ENCODE measurements at regions of chr5 and their contacts with region 1.

Region 1: GRCh38 chr5:112146323-112147226 is 272.5 kb downstream of the EPB41L4A start:
- DNase-seq: peak; percentile 57 to 66 (median 58)
- H3K4me3 ChIP-seq: no peak overlapping the region
- H3K4me3 Mint-ChIP-seq: no peak overlapping the region
- H3K27ac ChIP-seq: no peak overlapping the region
- H3K27ac Mint-ChIP-seq: no peak overlapping the region
- H3K4me1 ChIP-seq: no peaks in the 10 kb centered on the region
- H3K4me1 Mint-ChIP-seq: no peaks in the 10 kb centered on the region
- H3K27me3 ChIP-seq: no peaks in the 10 kb centered on the region
- H3K27me3 Mint-ChIP-seq: peaks cover 12 to 20% of the 10 kb centered on the region in 2 donors

Region 2: GRCh38 chr5:110757118-110757729 is 1389.4 kb before region 1 on chr5:
- CTCF ChIA-PET with region 1: interaction called, 3 read pairs
- POLR2A ChIA-PET with region 1: no interaction called
- intact Hi-C with region 1: loop called (anchors 1 kb)
- DNase-seq: peak in 4 of 5 donors; percentile 28 to 43 (median 30)
- H3K4me3 ChIP-seq: no peak overlapping the region
- H3K4me3 Mint-ChIP-seq: no peak overlapping the region
- H3K27ac ChIP-seq: no peak overlapping the region
- H3K27ac Mint-ChIP-seq: peak overlapping the region in 1 of 7 donors; percentile 40
- H3K4me1 ChIP-seq: peaks cover 26% of the 10 kb centered on the region
- H3K4me1 Mint-ChIP-seq: peaks cover 20 to 31% (median 22%) of the 10 kb centered on the region in 4 donors
- H3K27me3 ChIP-seq: no peaks in the 10 kb centered on the region
- H3K27me3 Mint-ChIP-seq: no peaks in the 10 kb centered on the region

Region 3: GRCh38 chr5:111158105-111158744 is 988.4 kb before region 1 on chr5:
- CTCF ChIA-PET with region 1: interaction called, 3 read pairs
- POLR2A ChIA-PET with region 1: no interaction called
- intact Hi-C with region 1: loop called (anchors 1 kb)
- DNase-seq: peak; percentile 66 to 79 (median 72)
- H3K4me3 ChIP-seq: no peak overlapping the region
- H3K4me3 Mint-ChIP-seq: peak overlapping the region in 1 of 8 donors; percentile 15
- H3K27ac ChIP-seq: no peak overlapping the region
- H3K27ac Mint-ChIP-seq: no peak overlapping the region
- H3K4me1 ChIP-seq: no peaks in the 10 kb centered on the region
- H3K4me1 Mint-ChIP-seq: peaks cover 0 to 6% (median 3%) of the 10 kb centered on the region in 4 donors
- H3K27me3 ChIP-seq: no peaks in the 10 kb centered on the region
- H3K27me3 Mint-ChIP-seq: peaks cover 4 to 7% of the 10 kb centered on the region in 2 donors

Region 4: GRCh38 chr5:111530298-111530740 is 616.3 kb before region 1 on chr5:
- CTCF ChIA-PET with region 1: interaction called, 3 read pairs
- POLR2A ChIA-PET with region 1: no interaction called
- intact Hi-C with region 1: loop called (anchors 5 kb)
- DNase-seq: peak; percentile 84 to 98 (median 87)
- H3K4me3 ChIP-seq: peak overlapping the region in 1 of 2 donors; percentile 3
- H3K4me3 Mint-ChIP-seq: peak overlapping the region; percentile 31 to 79 (median 66)
- H3K27ac ChIP-seq: peak overlapping the region; percentile 68
- H3K27ac Mint-ChIP-seq: peak overlapping the region; percentile 76 to 98 (median 89)
- H3K4me1 ChIP-seq: peaks cover 18% of the 10 kb centered on the region
- H3K4me1 Mint-ChIP-seq: peaks cover 13 to 17% (median 15%) of the 10 kb centered on the region in 4 donors
- H3K27me3 ChIP-seq: no peaks in the 10 kb centered on the region
- H3K27me3 Mint-ChIP-seq: peaks cover 0 to 1% of the 10 kb centered on the region in 2 donors